CD8-positive, alpha-beta T cell (primary cell): ENCODE measurements at regions of chr3 and their contacts with region 1.

Region 1: DNA sequence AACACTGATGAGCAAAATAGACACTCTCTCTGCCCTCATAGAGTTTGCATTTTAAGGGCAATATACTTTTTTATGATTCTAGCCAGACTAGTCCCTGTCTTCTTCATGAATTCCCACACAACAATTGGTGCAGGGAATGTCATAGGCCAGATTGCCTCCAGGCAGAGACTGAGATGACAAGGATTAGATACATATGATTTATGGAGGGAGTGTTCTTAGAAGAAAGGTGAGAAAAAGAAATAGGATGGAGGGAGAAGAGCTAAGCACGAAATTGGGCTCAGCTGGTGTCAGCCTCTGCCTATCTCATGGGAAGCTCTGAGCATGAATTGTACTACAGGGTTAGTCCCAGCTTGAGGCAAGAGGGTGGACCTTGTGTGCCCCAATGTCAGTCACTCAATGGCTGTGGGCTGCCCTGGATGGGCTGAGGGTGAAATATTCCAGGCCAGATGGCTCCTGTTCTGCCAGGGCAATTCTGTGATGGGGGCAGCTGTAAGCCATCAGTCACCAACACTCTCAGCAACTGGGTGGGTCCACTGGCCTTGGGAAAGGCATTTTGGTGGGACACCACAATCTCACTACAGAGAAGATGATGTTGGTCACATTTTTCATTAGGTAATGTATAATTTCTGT is 31.1 kb downstream of the EIF1B start:
- DNase-seq: no peak
- ATAC-seq: no peak
- H3K4me3 ChIP-seq: no peak overlapping the region
- H3K4me3 Mint-ChIP-seq: no peak overlapping the region
- H3K27ac ChIP-seq: no peak overlapping the region
- H3K27ac Mint-ChIP-seq: no peak overlapping the region
- H3K4me1 ChIP-seq: no peaks in the 10 kb centered on the region
- H3K4me1 Mint-ChIP-seq: no peaks in the 10 kb centered on the region
- H3K27me3 ChIP-seq: no peaks in the 10 kb centered on the region
- H3K27me3 Mint-ChIP-seq: no peaks in the 10 kb centered on the region
- CTCF ChIP-seq: no peak

Region 2: DNA sequence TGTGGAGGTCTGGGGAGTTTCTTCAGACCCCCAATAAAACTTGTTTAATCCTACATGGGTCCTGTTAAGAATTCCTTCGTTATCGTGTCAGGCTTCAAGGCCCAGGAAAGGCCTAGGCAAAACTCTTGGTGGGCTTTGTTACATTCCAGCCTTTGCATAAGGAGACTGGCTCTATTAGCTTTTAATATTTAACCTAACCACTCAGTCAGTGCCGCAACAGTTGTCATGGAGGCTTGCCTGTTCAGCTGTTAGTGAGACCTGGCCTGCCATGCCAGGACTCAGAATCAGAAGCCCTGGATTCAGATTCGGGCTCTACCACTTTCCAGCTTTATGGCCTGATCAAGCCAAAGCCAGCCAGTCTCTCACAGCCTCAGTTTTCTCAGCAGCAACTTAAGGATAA is 11.6 kb before region 1 on chr3:
- CTCF ChIA-PET with region 1: interaction called, 13 read pairs
- POLR2A ChIA-PET with region 1: interaction called, 3 read pairs
- intact Hi-C with region 1: no loop called
- DNase-seq: no peak
- ATAC-seq: no peak
- H3K4me3 ChIP-seq: no peak overlapping the region
- H3K4me3 Mint-ChIP-seq: no peak overlapping the region
- H3K27ac ChIP-seq: no peak overlapping the region
- H3K27ac Mint-ChIP-seq: no peak overlapping the region
- H3K4me1 ChIP-seq: no peaks in the 10 kb centered on the region
- H3K4me1 Mint-ChIP-seq: peaks cover 3% of the 10 kb centered on the region
- H3K27me3 ChIP-seq: no peaks in the 10 kb centered on the region
- H3K27me3 Mint-ChIP-seq: peaks cover 3% of the 10 kb centered on the region
- CTCF ChIP-seq: no peak

Region 3: DNA sequence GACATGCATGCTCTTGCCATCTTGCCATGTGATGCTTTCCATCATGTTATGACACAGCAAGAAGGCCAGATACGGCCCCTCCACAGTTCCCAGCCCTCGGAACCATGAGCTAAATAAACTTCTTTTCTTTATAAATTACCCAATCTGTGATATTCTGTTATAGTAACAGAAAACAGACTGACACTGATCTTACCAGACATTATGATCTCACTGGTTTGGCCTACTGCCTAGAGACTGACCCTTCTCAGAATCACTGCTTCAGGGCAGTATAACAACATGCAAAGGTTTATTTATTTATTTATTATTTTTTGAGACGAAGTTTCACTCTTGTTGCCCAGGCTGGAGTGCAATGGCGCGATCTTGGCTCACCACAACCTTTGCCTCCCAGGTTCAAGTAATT is 150.3 kb after region 1 on chr3:
- CTCF ChIA-PET with region 1: no interaction called
- POLR2A ChIA-PET with region 1: no interaction called
- intact Hi-C with region 1: no loop called
- DNase-seq: no peak
- ATAC-seq: no peak
- H3K4me3 ChIP-seq: no peak overlapping the region
- H3K4me3 Mint-ChIP-seq: no peak overlapping the region
- H3K27ac ChIP-seq: no peak overlapping the region
- H3K27ac Mint-ChIP-seq: no peak overlapping the region
- H3K4me1 ChIP-seq: no peaks in the 10 kb centered on the region
- H3K4me1 Mint-ChIP-seq: no peaks in the 10 kb centered on the region
- H3K27me3 ChIP-seq: no peaks in the 10 kb centered on the region
- H3K27me3 Mint-ChIP-seq: no peaks in the 10 kb centered on the region
- CTCF ChIP-seq: no peak